ENCODE measurements at regions of chrX and their contacts with region 1.

Region 1: DNA sequence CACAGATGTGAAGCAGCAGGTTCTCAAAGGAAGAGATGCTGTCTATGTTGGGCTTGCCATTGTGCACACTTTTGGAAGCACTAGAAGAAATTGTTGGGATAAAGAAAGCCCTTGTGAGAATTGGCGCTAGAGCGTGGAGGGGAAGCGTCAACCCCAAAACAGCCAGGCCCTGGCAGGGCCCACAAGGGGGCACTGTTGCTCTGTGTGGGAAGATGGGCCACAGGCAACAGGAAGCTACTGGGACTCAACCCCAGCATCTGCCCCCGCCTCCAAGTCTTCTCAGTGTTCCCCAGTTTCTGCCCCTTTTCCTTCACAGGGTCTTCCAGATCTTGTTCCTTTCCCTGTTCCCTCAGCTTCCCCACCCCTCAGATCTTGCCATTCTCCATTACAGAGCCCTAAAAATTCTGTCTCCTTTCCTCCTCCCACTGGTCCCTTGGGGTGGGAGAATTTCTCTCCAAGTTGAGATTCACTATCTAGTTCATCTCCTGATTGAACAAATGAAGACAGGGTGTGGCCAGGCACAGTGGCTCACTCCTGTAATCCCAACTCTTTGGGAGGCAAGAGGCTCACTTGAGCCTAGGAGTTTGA is 85.5 kb downstream of the STARD8 start:
- DNase-seq: peak; percentile 71
- ATAC-seq: peak; percentile 77
- H3K4me3 ChIP-seq: no peak overlapping the region
- H3K27ac ChIP-seq: no peak overlapping the region
- H3K4me1 ChIP-seq: no peaks in the 10 kb centered on the region
- H3K27me3 ChIP-seq: peaks cover 8% of the 10 kb centered on the region; the same call in 1 of the 2 replicates
- CTCF ChIP-seq: peak; percentile 75

Region 2: DNA sequence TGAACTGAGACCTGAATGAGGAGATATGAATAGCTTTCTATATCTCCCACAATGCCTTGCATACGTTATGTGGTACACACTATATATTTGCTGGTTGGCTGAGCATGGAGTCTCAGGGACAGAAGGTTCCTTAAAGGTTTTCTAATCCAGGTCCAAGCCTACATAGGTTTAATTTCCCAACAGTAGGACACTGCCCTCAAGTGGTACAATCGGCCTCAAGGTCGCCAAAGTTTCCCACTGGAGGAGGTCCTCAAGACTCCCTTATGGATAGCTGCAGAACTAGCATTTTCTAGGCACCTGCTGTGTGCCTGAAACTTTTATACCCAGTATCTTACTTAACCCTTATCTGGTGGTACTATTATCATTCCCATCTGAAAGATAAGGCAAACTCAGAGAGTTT is 74.8 kb after region 1 on chrX:
- CTCF ChIA-PET with region 1: interaction called, 6 read pairs
- POLR2A ChIA-PET with region 1: no interaction called
- intact Hi-C with region 1: loop called (anchors 1 kb)
- DNase-seq: peak; percentile 59
- ATAC-seq: peak; percentile 67
- H3K4me3 ChIP-seq: no peak overlapping the region
- H3K27ac ChIP-seq: no peak overlapping the region
- H3K4me1 ChIP-seq: no peaks in the 10 kb centered on the region
- H3K27me3 ChIP-seq: peaks cover 10% of the 10 kb centered on the region; the same call in 1 of the 2 replicates
- CTCF ChIP-seq: peak; percentile 60

Region 3: GRCh38 chrX:69387567-69388487 is 654.8 kb after region 1 on chrX:
- CTCF ChIA-PET with region 1: no interaction called
- POLR2A ChIA-PET with region 1: no interaction called
- intact Hi-C with region 1: loop called (anchors 2 kb)
- DNase-seq: peak; percentile 48
- ATAC-seq: peak; percentile 73
- H3K4me3 ChIP-seq: no peak overlapping the region
- H3K27ac ChIP-seq: no peak overlapping the region
- H3K4me1 ChIP-seq: no peaks in the 10 kb centered on the region
- H3K27me3 ChIP-seq: peaks cover 13% of the 10 kb centered on the region; the same call in 1 of the 2 replicates
- CTCF ChIP-seq: peak; percentile 82

Measured in PC-3 (cell line).